CD8-positive, alpha-beta T cell (primary cell): ENCODE measurements at regions of chr1 and their contacts with region 1.

Region 1: GRCh38 chr1:163874070-163874469 is 552.3 kb downstream of the NUF2 start:
- DNase-seq: no peak
- ATAC-seq: no peak
- H3K4me3 ChIP-seq: no peak overlapping the region
- H3K4me3 Mint-ChIP-seq: no peak overlapping the region
- H3K27ac ChIP-seq: no peak overlapping the region
- H3K27ac Mint-ChIP-seq: no peak overlapping the region
- H3K4me1 ChIP-seq: no peaks in the 10 kb centered on the region
- H3K4me1 Mint-ChIP-seq: no peaks in the 10 kb centered on the region
- H3K27me3 ChIP-seq: no peaks in the 10 kb centered on the region
- H3K27me3 Mint-ChIP-seq: no peaks in the 10 kb centered on the region
- CTCF ChIP-seq: no peak

Region 2: DNA sequence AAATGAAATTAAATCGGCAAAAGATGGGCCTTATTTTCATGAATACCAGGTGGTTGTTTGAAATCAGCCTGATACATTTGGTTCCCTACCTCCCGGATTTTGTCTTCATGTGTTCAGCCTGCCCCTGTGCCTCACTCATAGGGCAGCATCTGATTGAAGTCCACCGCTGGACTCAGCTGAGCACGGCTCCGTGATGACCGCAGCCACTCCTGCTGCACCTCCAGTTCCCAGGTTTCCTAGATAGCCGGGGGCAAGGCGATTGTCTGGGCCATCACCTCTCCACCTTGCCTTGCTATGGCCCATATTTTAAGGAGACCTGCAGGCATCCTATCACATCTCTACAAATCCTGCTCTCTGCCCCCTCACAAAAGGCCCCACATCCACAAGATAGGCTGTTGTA is 11.4 kb after region 1 on chr1:
- CTCF ChIA-PET with region 1: no interaction called
- POLR2A ChIA-PET with region 1: no interaction called
- intact Hi-C with region 1: no loop called
- DNase-seq: no peak
- ATAC-seq: no peak
- H3K4me3 ChIP-seq: no peak overlapping the region
- H3K4me3 Mint-ChIP-seq: no peak overlapping the region
- H3K27ac ChIP-seq: no peak overlapping the region
- H3K27ac Mint-ChIP-seq: no peak overlapping the region
- H3K4me1 ChIP-seq: no peaks in the 10 kb centered on the region
- H3K4me1 Mint-ChIP-seq: no peaks in the 10 kb centered on the region
- H3K27me3 ChIP-seq: no peaks in the 10 kb centered on the region
- H3K27me3 Mint-ChIP-seq: no peaks in the 10 kb centered on the region
- CTCF ChIP-seq: no peak

Region 3: GRCh38 chr1:163897412-163898155 is 23.5 kb after region 1 on chr1:
- CTCF ChIA-PET with region 1: no interaction called
- POLR2A ChIA-PET with region 1: no interaction called
- intact Hi-C with region 1: loop called in 1 of 2 experiments (anchors 1 kb)
- DNase-seq: no peak
- ATAC-seq: no peak
- H3K4me3 ChIP-seq: no peak overlapping the region
- H3K4me3 Mint-ChIP-seq: no peak overlapping the region
- H3K27ac ChIP-seq: no peak overlapping the region
- H3K27ac Mint-ChIP-seq: no peak overlapping the region
- H3K4me1 ChIP-seq: no peaks in the 10 kb centered on the region
- H3K4me1 Mint-ChIP-seq: no peaks in the 10 kb centered on the region
- H3K27me3 ChIP-seq: no peaks in the 10 kb centered on the region
- H3K27me3 Mint-ChIP-seq: no peaks in the 10 kb centered on the region
- CTCF ChIP-seq: no peak

Region 4: GRCh38 chr1:163959622-163960021 is 85.6 kb after region 1 on chr1:
- CTCF ChIA-PET with region 1: no interaction called
- POLR2A ChIA-PET with region 1: no interaction called
- intact Hi-C with region 1: no loop called
- DNase-seq: no peak
- ATAC-seq: no peak
- H3K4me3 ChIP-seq: no peak overlapping the region
- H3K4me3 Mint-ChIP-seq: no peak overlapping the region
- H3K27ac ChIP-seq: no peak overlapping the region
- H3K27ac Mint-ChIP-seq: no peak overlapping the region
- H3K4me1 ChIP-seq: no peaks in the 10 kb centered on the region
- H3K4me1 Mint-ChIP-seq: no peaks in the 10 kb centered on the region
- H3K27me3 ChIP-seq: no peaks in the 10 kb centered on the region
- H3K27me3 Mint-ChIP-seq: no peaks in the 10 kb centered on the region
- CTCF ChIP-seq: no peak